HAP-1 (cell line): ENCODE measurements at regions of chr4 and their contacts with region 1.

Region 1: DNA sequence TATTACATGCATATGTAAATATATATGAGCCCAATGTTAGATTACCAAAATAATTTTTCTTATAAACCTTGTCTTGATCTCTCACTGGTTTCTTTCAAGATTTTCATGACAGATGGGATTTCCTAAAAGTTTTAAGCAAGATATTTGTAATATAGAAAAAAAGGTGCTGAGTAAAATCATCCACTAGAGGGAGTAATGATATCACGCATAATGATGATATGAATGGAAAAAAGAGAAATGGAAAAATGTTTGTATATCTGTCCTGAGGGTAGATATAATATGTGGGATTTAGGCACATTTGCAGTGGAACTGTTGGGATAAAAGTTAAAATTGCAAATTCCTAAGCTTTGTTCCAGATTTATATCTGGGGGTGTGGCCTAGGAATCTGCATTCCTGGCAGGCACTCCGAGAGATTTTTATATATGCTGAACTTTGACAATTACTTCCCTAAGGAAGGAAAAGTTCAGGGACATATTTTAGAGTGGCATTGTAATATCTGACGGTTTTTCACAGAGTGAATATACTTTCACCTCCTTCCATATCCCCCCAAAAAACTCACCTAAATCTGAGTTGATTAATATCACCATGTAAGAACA is 60.5 kb downstream of the TMA16 start:
- DNase-seq: peak in 1 of 2 experiments; percentile 67
- H3K4me3 ChIP-seq: no peak overlapping the region
- H3K4me1 ChIP-seq: peaks cover 6% of the 10 kb centered on the region
- H3K27me3 ChIP-seq: no peaks in the 10 kb centered on the region

Region 2: GRCh38 chr4:163681208-163681821 is 126.3 kb after region 1 on chr4:
- in situ Hi-C with region 1: loop called (anchors 25 kb)
- DNase-seq: peak; percentile 21 to 43
- H3K4me3 ChIP-seq: no peak overlapping the region
- H3K4me1 ChIP-seq: no peaks in the 10 kb centered on the region
- H3K27me3 ChIP-seq: no peaks in the 10 kb centered on the region

Region 3: DNA sequence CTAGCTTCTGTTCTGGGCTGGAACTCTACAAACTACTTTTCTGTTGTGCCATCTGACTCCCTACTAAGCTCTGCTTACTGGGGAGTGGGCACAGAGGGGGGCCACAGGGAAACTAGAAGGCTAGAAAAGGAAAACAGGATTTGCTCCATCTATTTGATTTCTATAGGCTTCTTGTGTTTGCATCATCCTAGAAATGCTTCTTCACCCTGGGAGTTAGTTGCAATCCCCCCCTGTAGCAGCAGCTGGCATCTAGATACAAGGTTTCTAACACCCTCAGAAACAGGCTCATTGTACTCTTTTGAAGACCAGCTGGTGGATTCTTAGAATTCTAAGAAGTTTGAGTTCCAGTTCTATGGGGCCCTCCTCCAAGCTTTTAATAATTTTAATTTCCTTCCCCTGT is 152.9 kb after region 1 on chr4:
- in situ Hi-C with region 1: no loop called
- DNase-seq: no peak
- H3K4me3 ChIP-seq: no peak overlapping the region
- H3K4me1 ChIP-seq: no peaks in the 10 kb centered on the region
- H3K27me3 ChIP-seq: no peaks in the 10 kb centered on the region

Region 4: GRCh38 chr4:163755013-163755412 is 200.0 kb after region 1 on chr4:
- in situ Hi-C with region 1: loop called (anchors 10 kb)
- DNase-seq: peak; percentile 16 to 42
- H3K4me3 ChIP-seq: no peak overlapping the region
- H3K4me1 ChIP-seq: peaks cover 3% of the 10 kb centered on the region
- H3K27me3 ChIP-seq: no peaks in the 10 kb centered on the region

Region 5: DNA sequence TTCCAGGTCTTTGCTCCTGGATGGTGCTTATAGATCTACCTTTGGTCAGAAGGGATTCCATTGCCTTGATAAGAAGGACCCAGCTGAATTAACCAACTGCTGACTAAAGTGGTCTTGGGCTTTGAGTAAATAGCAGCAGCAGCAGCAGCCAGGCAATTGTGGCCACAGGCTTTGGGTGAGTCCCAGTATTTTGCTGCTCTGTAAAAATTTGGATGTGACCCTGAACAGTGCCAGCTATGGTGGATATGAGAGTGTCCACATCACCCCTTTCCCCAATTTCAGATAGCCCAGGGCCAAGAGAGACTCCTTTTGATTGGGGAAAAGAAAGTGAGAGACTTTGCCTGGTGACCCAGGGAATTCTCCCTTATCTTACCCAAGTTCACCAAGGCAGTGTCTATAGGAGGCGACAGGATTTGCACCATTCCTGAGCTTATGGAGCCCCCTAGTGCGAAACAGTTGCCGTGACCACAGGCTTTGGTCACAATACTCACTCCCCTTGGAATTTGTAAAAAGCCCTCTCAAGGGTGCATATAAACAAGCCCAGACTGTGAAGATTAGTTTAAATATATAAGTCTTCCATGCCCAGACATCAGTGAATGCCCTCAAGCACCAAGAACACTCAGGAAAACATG is 457.5 kb after region 1 on chr4:
- in situ Hi-C with region 1: loop called (anchors 5 kb)
- DNase-seq: peak; percentile 66 to 75
- H3K4me3 ChIP-seq: no peak overlapping the region
- H3K4me1 ChIP-seq: no peaks in the 10 kb centered on the region
- H3K27me3 ChIP-seq: no peaks in the 10 kb centered on the region; the same call in none of the 2 replicates

Region 6: DNA sequence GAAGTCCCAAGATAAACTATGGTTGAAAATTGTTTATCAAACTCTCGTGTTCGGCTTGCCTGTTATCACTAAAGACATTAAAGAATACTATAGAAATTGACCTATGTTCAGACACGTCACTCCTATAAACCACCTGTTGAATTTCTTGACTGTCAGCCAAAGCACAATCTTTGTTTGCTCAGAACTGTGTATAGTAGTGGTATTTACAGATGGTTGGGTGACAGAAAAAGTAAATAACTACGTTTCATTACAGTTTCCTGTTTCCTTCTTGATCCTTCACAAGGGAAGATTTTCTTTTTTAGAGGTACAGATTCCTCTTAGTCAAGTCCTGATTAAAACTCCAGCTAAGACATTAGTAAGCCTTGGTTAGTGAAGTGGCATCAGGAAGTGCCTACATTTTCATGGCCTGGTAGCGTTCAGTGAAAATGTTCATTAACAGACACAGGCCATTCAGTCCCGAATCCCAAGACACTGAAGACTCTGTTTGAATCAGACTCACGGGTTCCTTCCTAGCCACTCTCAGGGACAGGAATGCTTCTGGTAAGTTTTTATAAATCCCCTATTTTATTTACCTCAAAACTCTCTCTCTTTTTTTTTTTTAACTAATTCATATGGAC is 1199.0 kb after region 1 on chr4 and contains the start of gene SMIM31:
- in situ Hi-C with region 1: loop called (anchors 5 kb)
- DNase-seq: no peak
- H3K4me3 ChIP-seq: no peak within 1 kb of the TSS
- H3K4me1 ChIP-seq: no peaks in the 10 kb centered on the region
- H3K27me3 ChIP-seq: no peaks in the 10 kb centered on the region